ENCODE measurements at regions of chr6 and their contacts with region 1.

Region 1: GRCh38 chr6:7479801-7480266 is 61.6 kb upstream of the DSP start:
- DNase-seq: peak in 1 of 2 donors; percentile 72
- H3K4me3 ChIP-seq: peak overlapping the region in 2 of 3 donors; percentile 21 to 42
- H3K27ac ChIP-seq: peak overlapping the region; percentile 62 to 74
- H3K4me1 ChIP-seq: no peaks in the 10 kb centered on the region
- H3K27me3 ChIP-seq: no peaks in the 10 kb centered on the region
- CTCF ChIP-seq: no peak
- POLR2A ChIP-seq: no peak

Region 2: DNA sequence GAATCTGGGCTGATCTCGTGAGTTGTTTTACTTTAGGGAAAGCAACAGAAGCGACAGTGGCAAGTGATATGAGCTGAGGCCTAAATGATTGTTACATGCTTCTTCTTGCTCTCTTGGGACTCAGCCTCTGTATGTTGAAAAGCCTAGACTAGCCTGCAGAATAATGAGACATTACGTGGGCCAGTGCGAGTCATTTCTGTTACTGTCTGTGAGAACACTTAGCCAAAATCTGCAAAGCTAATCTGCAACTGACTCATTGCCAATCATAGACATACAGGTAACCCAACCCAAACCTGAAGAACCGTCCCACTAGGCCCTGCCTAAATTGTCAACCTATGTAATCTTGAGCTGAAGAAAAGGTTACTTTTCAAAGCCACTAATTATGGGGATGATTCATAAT is 1082.0 kb before region 1 on chr6:
- intact Hi-C with region 1: no loop called
- DNase-seq: no peak
- H3K4me3 ChIP-seq: no peak overlapping the region
- H3K27ac ChIP-seq: no peak overlapping the region
- H3K4me1 ChIP-seq: no peaks in the 10 kb centered on the region
- H3K27me3 ChIP-seq: no peaks in the 10 kb centered on the region
- CTCF ChIP-seq: no peak
- POLR2A ChIP-seq: no peak

Region 3: GRCh38 chr6:7404546-7404945 is 75.3 kb before region 1 on chr6:
- intact Hi-C with region 1: loop called (anchors 2 kb)
- DNase-seq: no peak
- H3K4me3 ChIP-seq: no peak overlapping the region
- H3K27ac ChIP-seq: no peak overlapping the region
- H3K4me1 ChIP-seq: no peaks in the 10 kb centered on the region
- H3K27me3 ChIP-seq: no peaks in the 10 kb centered on the region
- CTCF ChIP-seq: no peak
- POLR2A ChIP-seq: no peak